Tibial artery (tissue), 4 donors: ENCODE measurements at regions of chr2 and their contacts with region 1.

Region 1: GRCh38 chr2:37837628-37838328 is 87.3 kb upstream of the RMDN2 start:
- DNase-seq: no peak
- H3K4me3 ChIP-seq: no peak overlapping the region
- H3K27ac ChIP-seq: no peak overlapping the region
- H3K4me1 ChIP-seq: no peaks in the 10 kb centered on the region
- H3K27me3 ChIP-seq: no peaks in the 10 kb centered on the region
- CTCF ChIP-seq: no peak

Region 2: GRCh38 chr2:37389989-37390765 is 447.6 kb before region 1 on chr2:
- intact Hi-C with region 1: loop called (anchors 5 kb)
- DNase-seq: no peak
- H3K4me3 ChIP-seq: no peak overlapping the region
- H3K27ac ChIP-seq: no peak overlapping the region
- H3K4me1 ChIP-seq: peaks cover 0 to 3% (median 0%) of the 10 kb centered on the region in 4 donors
- H3K27me3 ChIP-seq: no peaks in the 10 kb centered on the region
- CTCF ChIP-seq: no peak